ENCODE measurements at regions of chr22 and their contacts with region 1.

Region 1: DNA sequence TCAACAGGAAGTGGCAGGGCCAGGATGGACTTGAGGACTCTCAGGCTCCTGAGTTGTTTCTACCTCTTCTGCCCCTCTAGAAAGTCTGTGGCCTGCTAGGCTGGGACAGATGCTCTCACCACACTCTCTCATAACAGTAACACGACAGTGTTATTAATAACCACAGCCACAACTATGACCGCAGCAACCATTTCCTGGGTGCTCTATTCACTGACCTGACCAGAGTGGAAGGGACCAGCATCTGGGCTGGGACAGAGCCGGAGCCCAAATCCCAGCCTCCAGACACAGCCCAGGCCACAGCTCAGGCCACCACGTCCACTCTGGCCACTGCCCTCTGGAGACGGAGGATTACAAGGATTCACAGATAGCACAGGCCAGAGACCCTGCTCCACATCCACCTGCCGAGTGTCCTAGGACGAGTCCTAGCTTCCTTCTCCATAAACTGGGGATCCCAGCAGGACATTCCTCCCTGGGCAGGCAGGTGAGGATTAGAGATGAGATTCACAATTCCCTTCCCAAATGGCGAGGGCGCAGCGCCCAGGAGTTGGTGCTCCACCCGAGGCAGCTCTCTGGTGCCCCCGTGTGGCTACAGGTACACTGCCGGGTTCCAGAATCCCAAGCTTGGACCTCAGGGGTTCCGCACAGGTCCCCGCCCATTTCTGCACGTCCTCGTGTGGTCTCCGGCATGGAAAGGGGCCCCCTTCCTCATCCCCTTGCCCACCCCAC is 7.0 kb downstream of the PNPLA5 start:
- DNase-seq: no peak
- ATAC-seq: peak; percentile 54
- H3K4me3 ChIP-seq: no peak overlapping the region
- H3K27ac ChIP-seq: no peak overlapping the region
- H3K4me1 ChIP-seq: no peaks in the 10 kb centered on the region
- H3K27me3 ChIP-seq: no peaks in the 10 kb centered on the region; a peak in 2 of 5 replicates
- CTCF ChIP-seq: peak; percentile 74
- EP300 ChIP-seq: no peak
- POLR2A ChIP-seq: no peak
- RAD21 ChIP-seq: no peak

Region 2: DNA sequence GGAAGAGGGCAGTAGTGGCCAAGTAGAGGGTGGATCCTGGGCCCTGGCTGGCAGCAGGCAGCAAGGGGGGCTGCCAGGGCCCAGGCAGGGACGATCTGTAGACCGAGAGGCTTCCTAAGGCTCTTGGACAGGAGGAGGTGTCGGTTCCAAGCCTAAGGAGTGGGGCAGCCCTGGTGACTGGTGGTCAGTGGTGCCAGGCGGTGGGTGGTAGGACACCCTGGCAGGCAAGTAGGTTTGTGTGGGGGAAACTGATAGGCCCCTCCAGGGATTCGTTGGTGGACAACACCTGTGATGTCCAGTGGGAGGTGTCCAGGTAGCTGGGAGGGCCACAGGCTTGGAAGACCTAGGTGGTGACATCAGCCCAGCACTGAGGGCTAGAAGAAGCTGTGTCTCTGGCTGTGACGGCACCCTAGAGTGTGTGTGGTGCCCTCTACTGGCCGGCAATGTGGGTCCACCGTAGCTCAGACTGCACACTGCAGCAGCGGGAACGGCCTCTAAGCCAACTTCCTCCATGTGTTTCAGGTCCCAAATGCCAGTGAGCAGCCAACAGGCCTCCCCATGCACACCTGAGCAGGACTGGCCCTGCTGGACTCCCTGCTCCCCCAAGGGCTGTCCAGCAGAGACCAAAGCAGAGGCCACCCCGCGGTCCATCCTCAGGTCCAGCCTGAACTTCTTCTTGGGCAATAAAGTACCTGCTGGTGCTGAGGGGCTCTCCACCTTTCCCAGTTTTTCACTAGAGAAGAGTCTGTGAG is 61.0 kb after region 1 on chr22:
- CTCF ChIA-PET with region 1: interaction called, 7 read pairs
- POLR2A ChIA-PET with region 1: no interaction called
- in situ Hi-C with region 1: no loop called
- intact Hi-C with region 1: loop called (anchors 1 kb)
- DNase-seq: peak; percentile 60
- ATAC-seq: peak; percentile 97
- H3K4me3 ChIP-seq: no peak overlapping the region
- H3K27ac ChIP-seq: no peak overlapping the region
- H3K4me1 ChIP-seq: no peaks in the 10 kb centered on the region
- H3K27me3 ChIP-seq: no peaks in the 10 kb centered on the region
- CTCF ChIP-seq: peak; percentile 89
- EP300 ChIP-seq: no peak
- POLR2A ChIP-seq: peak in 1 of 2 experiments; percentile 12; a peak in 1 of 4 replicates
- RAD21 ChIP-seq: peak; percentile 73

Measured in HepG2 (cell line).